Tibial artery (tissue), 4 donors: ENCODE measurements at regions of chr11 and their contacts with region 1.

Region 1: GRCh38 chr11:64846998-64847666 is 2.7 kb upstream of the CDC42BPG start:
- DNase-seq: peak; percentile 86 to 93
- H3K4me3 ChIP-seq: no peak overlapping the region
- H3K27ac ChIP-seq: peak overlapping the region; percentile 1 to 35
- H3K4me1 ChIP-seq: peaks cover 0 to 57% (median 42%) of the 10 kb centered on the region in 4 donors
- H3K27me3 ChIP-seq: peaks cover 0 to 5% of the 10 kb centered on the region in 2 donors
- CTCF ChIP-seq: peak; percentile 98 to 99

Region 2: GRCh38 chr11:64887757-64888405 is 40.7 kb after region 1 on chr11:
- intact Hi-C with region 1: loop called (anchors 2 kb)
- DNase-seq: peak; percentile 59 to 87
- H3K4me3 ChIP-seq: peak overlapping the region; percentile 12 to 31
- H3K27ac ChIP-seq: peak overlapping the region; percentile 57 to 66
- H3K4me1 ChIP-seq: peaks cover 0 to 31% (median 12%) of the 10 kb centered on the region in 4 donors
- H3K27me3 ChIP-seq: no peaks in the 10 kb centered on the region
- CTCF ChIP-seq: peak; percentile 95 to 99

Region 3: GRCh38 chr11:64894070-64894796 is 47.1 kb after region 1 on chr11:
- intact Hi-C with region 1: loop called (anchors 2 kb)
- DNase-seq: peak; percentile 74 to 87
- H3K4me3 ChIP-seq: no peak overlapping the region
- H3K27ac ChIP-seq: no peak overlapping the region
- H3K4me1 ChIP-seq: no peaks in the 10 kb centered on the region
- H3K27me3 ChIP-seq: no peaks in the 10 kb centered on the region
- CTCF ChIP-seq: peak; percentile 82 to 91

Region 4: DNA sequence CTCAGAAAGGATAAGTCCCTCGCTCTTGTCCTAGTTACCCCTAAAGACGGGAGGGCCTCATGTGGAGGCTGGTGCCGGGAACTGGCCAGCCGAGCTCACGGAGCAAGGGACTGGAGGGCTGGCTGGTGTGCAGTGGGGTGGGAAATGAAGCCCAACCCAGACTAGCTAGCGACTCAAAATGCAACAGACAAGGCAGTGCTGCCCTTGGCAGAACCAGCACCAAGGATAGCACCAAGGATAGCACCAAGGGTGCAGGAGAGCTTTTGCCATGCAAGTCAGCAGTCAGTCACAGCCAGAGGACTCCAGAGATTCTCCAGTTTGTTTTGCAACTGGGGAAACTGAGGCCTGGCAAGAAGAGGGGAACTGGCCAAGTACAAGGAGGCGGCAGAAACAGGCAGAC is 156.2 kb after region 1 on chr11:
- intact Hi-C with region 1: no loop called
- DNase-seq: no peak
- H3K4me3 ChIP-seq: no peak overlapping the region
- H3K27ac ChIP-seq: no peak overlapping the region
- H3K4me1 ChIP-seq: no peaks in the 10 kb centered on the region
- H3K27me3 ChIP-seq: peaks cover 0 to 19% of the 10 kb centered on the region in 2 donors
- CTCF ChIP-seq: no peak

Region 5: GRCh38 chr11:65204646-65205601 is 357.8 kb after region 1 on chr11:
- intact Hi-C with region 1: no loop called
- DNase-seq: peak in 1 of 2 donors; percentile 56
- H3K4me3 ChIP-seq: no peak overlapping the region
- H3K27ac ChIP-seq: no peak overlapping the region
- H3K4me1 ChIP-seq: no peaks in the 10 kb centered on the region
- H3K27me3 ChIP-seq: no peaks in the 10 kb centered on the region
- CTCF ChIP-seq: peak; percentile 62 to 78